ENCODE measurements at regions of chr22 and their contacts with region 1.

Region 1: DNA sequence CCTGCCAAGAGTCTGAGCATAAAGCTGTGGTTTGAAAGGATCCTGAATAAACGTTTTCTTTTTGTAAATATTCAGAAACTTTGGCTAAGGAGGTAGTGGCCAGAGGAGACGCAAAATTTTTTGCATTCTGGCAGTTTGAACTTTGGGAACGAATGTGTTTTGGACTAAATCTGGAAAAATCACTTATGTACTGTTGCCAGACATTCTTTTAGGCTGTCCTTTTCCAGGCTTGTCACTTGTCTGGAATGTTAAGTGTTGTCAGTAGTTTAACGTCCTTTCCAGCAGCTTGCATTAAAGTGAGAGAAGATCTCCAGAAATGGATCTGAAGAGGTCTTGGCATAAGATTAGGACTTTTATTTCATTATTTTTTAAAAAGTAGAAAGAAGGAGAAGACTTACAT is 18.5 kb downstream of the SPECC1L start:
- DNase-seq: no peak
- H3K4me3 Mint-ChIP-seq: no peak overlapping the region
- H3K27ac Mint-ChIP-seq: no peak overlapping the region
- H3K4me1 Mint-ChIP-seq: peaks cover 24% of the 10 kb centered on the region
- H3K27me3 Mint-ChIP-seq: peaks cover 4% of the 10 kb centered on the region

Region 2: DNA sequence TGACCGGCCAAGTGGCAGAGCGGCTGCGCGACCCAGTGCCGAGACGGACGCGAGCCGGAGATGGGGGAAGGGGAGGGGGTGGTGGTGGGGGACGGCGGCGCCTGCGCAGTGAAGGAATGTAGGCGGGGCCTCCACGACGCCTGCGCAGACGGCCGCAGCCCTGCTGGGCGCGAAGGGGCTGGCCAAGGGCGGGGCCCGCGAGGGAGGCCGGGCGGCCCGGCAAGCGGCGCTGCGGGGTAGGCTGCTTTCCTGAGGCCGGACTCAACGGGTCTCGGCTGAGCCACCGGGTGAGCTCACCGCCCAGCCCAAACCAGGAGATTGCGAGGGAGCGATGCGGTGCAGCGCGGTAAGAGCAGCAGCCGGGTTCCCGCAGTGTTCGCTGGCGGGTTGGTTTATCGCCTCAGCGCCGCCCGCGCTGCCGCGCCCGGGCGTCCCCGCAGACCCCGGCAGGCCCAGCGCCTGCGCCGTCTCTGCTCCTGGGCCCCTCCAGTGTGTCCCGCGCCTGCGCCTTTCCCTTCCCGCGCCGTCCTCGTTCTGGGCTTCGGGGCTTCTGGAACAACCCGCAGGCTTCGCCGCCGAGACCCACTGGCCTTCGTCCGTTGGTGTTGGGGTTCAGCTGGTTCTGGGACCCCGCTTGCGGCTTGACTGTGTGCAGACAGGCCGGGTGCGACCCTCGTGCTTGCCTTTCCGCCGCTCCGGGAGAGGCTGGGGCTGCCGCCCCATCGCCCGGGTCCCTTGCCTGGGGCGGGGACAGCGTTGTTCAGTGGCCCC is 18.3 kb before region 1 on chr22 and contains the start of gene SPECC1L:
- intact Hi-C with region 1: loop called (anchors 1 kb)
- DNase-seq: peak; percentile 92
- H3K4me3 Mint-ChIP-seq: peak within 1 kb of the TSS; percentile 85
- H3K27ac Mint-ChIP-seq: peak within 1 kb of the TSS; percentile 82
- H3K4me1 Mint-ChIP-seq: peaks cover 35% of the 10 kb centered on the region
- H3K27me3 Mint-ChIP-seq: no peaks in the 10 kb centered on the region
- total RNA-seq, gene SPECC1L: 40.3 and 40.4 TPM in 2 replicates

Region 3: GRCh38 chr22:24305260-24305692 is 16.2 kb after region 1 on chr22:
- intact Hi-C with region 1: loop called (anchors 1 kb)
- DNase-seq: no peak
- H3K4me3 Mint-ChIP-seq: no peak overlapping the region
- H3K27ac Mint-ChIP-seq: peak overlapping the region; percentile 32
- H3K4me1 Mint-ChIP-seq: peaks cover 46% of the 10 kb centered on the region
- H3K27me3 Mint-ChIP-seq: no peaks in the 10 kb centered on the region

Region 4: DNA sequence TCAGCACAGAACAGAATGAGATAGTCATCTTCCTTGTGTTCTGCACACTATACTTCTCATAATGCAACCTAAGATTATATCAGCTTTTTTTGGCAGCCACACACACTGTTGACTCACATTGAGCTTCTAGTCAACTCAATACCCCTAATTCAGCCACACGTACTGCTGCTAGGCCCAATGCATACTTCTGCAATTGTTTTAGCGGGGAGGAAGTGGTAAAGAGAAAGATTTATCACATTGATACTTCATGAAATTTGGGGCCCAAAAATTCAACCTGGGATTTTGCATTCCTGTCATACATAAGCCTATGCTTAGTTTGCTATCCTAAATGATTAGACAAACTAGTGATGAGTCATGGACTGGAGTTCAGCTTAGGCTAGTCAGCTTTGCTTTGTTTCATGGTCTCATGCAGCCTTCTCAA is 197.4 kb after region 1 on chr22:
- intact Hi-C with region 1: loop called (anchors 5 kb)
- DNase-seq: peak; percentile 17
- H3K4me3 Mint-ChIP-seq: no peak overlapping the region
- H3K27ac Mint-ChIP-seq: peak overlapping the region; percentile 63
- H3K4me1 Mint-ChIP-seq: peaks cover 21% of the 10 kb centered on the region
- H3K27me3 Mint-ChIP-seq: peaks cover 9% of the 10 kb centered on the region